Motor neuron (in vitro differentiated cells): ENCODE measurements at regions of chr21 and their contacts with region 1.

Region 1: GRCh38 chr21:31064803-31065202 is 26.5 kb upstream of the KRTAP19-8 start:
- ATAC-seq: no peak
- H3K4me3 ChIP-seq: no peak overlapping the region
- H3K27ac ChIP-seq: no peak overlapping the region
- H3K4me1 ChIP-seq: peaks cover 0 to 15% of the 10 kb centered on the region in 2 donors

Region 2: DNA sequence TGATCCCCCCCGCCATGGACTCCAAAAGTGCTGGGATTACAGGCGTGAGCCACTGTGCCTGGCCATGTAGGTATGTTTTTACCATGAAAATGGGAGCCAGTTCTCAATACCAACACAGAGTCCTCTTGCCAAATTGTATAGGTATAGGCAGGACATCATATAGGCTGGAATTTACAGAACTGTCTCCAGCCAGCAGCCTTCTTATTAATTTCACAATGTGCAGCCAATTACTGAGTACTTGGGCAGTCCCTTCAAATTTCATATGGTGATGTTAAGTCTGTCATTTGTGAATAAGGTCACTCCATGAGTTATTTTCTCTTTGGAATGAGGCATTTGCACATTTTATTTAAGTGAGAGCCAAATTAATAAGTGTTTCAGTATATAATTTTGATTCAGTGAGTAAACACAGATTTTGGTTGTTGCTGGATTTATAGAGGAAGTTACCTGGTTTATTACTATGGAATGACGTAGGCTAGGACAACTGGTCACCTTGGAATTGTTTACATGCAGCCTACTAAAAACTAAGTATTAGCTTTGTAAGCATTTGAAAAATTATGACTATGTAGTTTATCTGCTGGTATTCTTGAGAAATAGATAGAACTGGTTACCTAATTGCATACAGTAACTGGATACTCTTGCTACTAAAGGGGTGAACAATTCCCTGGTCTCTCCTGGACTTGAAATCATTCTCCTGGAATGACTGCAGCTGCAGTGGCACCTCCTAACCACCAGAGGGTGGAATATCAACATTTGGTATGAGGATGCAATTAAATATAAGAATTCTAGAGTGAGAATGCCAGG is 724.2 kb before region 1 on chr21:
- in situ Hi-C with region 1: loop called in 1 of 9 experiments (anchors 25 kb)
- ATAC-seq: peak in 3 of 8 experiments; percentile 26 to 45 (median 31)
- H3K4me3 ChIP-seq: no peak overlapping the region
- H3K27ac ChIP-seq: no peak overlapping the region
- H3K4me1 ChIP-seq: peaks cover 0 to 8% of the 10 kb centered on the region in 2 donors